H1 (cell line): ENCODE measurements at regions of chr15 and their contacts with region 1.

Region 1: DNA sequence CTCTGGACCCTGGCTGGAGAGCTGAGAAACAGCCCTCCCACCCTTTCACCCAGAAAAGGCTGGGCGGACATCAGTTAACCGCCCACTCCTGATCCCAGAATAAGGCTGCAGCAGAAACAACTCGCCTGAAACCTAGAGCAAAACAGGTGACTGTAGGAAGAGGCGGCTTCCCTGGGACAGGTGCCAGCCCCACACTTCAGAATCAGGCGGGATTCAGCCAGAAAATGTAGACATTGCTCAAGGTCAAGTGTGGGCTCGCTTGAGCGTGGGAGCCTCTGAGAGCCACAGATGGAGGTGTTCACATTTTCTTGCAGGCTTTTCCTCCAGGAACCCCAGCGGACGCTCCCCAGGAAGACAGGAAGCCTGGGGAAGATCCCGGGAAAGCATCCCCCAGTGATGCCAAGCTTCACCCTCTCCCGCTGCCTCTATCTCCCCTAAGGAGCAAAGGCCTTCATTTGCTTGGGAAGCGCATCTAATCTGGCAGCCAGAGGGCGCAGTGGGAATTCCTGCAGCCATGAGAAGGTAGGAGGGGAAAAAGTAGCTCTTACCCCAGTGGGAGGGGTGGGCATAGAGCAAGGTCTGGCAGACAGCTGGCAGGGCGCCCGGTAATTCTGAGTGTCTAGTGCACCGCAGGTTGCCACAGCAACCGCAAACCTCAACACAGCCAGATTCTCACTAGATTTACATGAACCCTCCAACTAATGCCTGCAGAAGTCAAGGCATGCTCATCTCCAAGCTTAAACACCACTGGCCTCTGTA is 77.7 kb downstream of the OCA2 start:
- DNase-seq: peak; percentile 44 to 73
- H3K4me3 ChIP-seq: no peak overlapping the region; a peak in 1 of 8 replicates
- H3K27ac ChIP-seq: no peak overlapping the region
- H3K4me1 ChIP-seq: peaks cover 0 to 15% (median 7%) of the 10 kb centered on the region in 4 experiments; a peak in 6 of 7 replicates
- H3K27me3 ChIP-seq: no peaks in the 10 kb centered on the region; a peak in 1 of 7 replicates
- CTCF ChIP-seq: peak; percentile 72 to 91 (median 79)
- EP300 ChIP-seq: no peak
- POLR2A ChIP-seq: no peak
- RAD21 ChIP-seq: peak; percentile 54 to 68

Region 2: DNA sequence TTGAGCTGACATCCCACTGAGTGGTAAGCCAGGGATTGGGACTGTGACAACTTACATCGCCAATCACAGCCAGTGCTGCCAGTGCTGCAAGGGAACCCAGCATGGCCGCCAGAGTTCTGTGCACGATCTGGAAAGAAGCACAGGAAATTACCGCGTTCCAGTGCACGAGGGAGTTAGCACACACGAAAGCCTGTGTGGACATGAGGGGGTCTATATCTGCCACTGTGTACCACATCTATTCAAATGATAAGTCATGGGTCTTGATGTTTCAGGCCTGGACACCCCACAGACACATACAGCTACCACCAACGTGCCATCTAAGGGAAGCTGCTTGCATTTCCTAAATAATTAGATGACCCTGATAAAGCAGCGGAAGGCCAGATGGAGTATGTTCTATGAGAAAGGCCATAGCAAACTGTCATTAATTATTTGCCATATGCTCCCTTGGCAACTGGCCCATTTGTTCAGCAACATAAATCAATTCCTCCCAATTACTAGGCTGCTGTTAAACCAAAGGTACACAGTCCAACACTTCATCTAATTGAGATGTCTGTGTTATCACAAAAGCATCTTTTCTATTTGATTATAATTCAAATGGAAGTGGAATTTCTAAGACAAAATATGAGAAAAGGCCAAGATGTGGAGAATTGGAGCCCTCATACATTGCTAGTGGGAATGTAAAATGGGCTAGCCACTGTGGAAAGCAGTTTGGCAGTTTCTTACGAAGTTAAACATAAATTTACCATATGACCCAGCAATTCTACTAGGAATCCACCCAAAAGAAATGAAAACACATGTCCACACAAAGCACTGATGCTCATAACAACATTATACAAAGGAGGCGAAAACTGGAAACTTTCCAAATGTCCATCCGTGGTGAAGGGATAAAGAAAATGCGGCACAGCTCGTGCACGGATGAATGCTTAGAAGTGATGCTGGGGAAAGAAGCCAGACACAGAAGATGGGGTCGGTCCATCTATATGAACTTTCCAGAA is 30.6 kb before region 1 on chr15:
- CTCF ChIA-PET with region 1: interaction called, 10 read pairs
- POLR2A ChIA-PET with region 1: no interaction called
- DNase-seq: no peak
- H3K4me3 ChIP-seq: no peak overlapping the region
- H3K27ac ChIP-seq: no peak overlapping the region
- H3K4me1 ChIP-seq: no peaks in the 10 kb centered on the region
- H3K27me3 ChIP-seq: no peaks in the 10 kb centered on the region
- CTCF ChIP-seq: no peak
- EP300 ChIP-seq: no peak
- POLR2A ChIP-seq: no peak
- RAD21 ChIP-seq: no peak

Region 3: GRCh38 chr15:28037969-28038590 is 16.6 kb after region 1 on chr15:
- CTCF ChIA-PET with region 1: interaction called, 53 read pairs
- POLR2A ChIA-PET with region 1: no interaction called
- DNase-seq: no peak
- H3K4me3 ChIP-seq: no peak overlapping the region
- H3K27ac ChIP-seq: no peak overlapping the region
- H3K4me1 ChIP-seq: no peaks in the 10 kb centered on the region
- H3K27me3 ChIP-seq: no peaks in the 10 kb centered on the region
- CTCF ChIP-seq: no peak
- EP300 ChIP-seq: no peak
- POLR2A ChIP-seq: no peak
- RAD21 ChIP-seq: no peak

Region 4: DNA sequence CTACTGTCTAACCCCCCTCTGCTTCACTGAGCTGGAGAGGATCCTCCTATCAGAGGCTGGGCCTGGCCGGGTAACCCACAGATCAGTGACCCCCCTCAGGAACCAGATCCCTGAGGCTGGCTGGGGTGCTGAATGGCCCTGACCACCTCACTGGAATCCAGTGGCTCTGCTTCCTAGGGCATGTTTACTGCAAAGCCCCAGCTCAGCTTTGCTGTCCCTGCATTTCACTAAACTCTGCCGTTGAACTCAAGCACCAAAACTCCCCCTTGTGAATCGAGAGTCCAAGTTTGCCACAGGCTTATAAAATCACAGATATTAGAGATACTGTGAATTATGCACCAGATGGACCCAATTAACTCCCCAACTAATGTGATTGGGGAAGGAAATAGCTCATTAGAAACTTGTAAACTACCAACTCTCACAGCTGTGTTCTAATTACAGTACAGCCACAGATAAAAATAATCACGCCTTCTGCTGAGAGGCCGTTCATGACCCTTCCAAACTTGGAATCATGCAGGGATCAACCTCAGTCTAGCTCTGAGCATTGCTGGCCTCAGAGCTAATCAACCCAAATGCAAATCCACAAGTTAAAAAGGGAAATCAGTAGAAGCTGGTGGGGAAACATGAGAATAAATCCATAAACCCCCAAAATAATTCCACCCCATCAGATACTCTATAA is 30.6 kb after region 1 on chr15:
- CTCF ChIA-PET with region 1: interaction called, 19 read pairs
- POLR2A ChIA-PET with region 1: no interaction called
- DNase-seq: no peak
- H3K4me3 ChIP-seq: no peak overlapping the region
- H3K27ac ChIP-seq: no peak overlapping the region
- H3K4me1 ChIP-seq: no peaks in the 10 kb centered on the region
- H3K27me3 ChIP-seq: no peaks in the 10 kb centered on the region
- CTCF ChIP-seq: no peak
- EP300 ChIP-seq: no peak
- POLR2A ChIP-seq: no peak
- RAD21 ChIP-seq: no peak

Region 5: DNA sequence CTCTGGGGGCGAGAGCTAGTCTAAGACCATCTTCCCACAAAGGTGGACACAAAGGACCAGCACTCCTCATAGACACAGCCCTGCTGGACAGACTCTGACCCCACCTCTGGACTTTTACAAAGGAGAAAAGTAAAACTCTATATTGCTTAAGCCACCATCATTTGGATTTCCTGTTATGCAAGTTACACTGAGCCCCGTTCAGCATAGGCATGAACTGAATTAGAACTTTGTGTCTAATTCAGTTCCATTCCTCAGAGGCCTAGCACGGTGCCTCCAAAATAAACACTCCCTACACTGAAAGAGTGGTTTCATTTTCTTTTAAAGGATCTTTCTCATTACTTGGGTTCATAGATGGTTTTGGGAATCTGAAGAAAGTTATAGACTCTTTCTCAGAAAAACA is 156.8 kb after region 1 on chr15:
- CTCF ChIA-PET with region 1: no interaction called
- POLR2A ChIA-PET with region 1: no interaction called
- DNase-seq: no peak
- H3K4me3 ChIP-seq: no peak overlapping the region
- H3K27ac ChIP-seq: no peak overlapping the region
- H3K4me1 ChIP-seq: no peaks in the 10 kb centered on the region
- H3K27me3 ChIP-seq: no peaks in the 10 kb centered on the region
- CTCF ChIP-seq: no peak
- EP300 ChIP-seq: no peak
- POLR2A ChIP-seq: no peak
- RAD21 ChIP-seq: no peak